Transverse colon (tissue), 4 donors: ENCODE measurements at regions of chr10 and their contacts with region 1.

Region 1: GRCh38 chr10:70549962-70550458 is 52.5 kb downstream of the PRF1 start:
- DNase-seq: peak; percentile 68
- H3K4me3 ChIP-seq: no peak overlapping the region
- H3K27ac ChIP-seq: no peak overlapping the region
- H3K4me1 ChIP-seq: no peaks in the 10 kb centered on the region
- H3K27me3 ChIP-seq: no peaks in the 10 kb centered on the region
- CTCF ChIP-seq: peak; percentile 87 to 92 (median 88)
- EP300 ChIP-seq: no peak
- POLR2A ChIP-seq: no peak

Region 2: GRCh38 chr10:70461215-70461986 is 88.6 kb before region 1 on chr10:
- in situ Hi-C with region 1: loop called in 1 of 4 experiments (anchors 10 kb)
- intact Hi-C with region 1: no loop called
- DNase-seq: peak; percentile 62
- H3K4me3 ChIP-seq: no peak overlapping the region
- H3K27ac ChIP-seq: peak overlapping the region in 2 of 4 donors; percentile 16 to 44
- H3K4me1 ChIP-seq: peaks cover 8 to 28% (median 19%) of the 10 kb centered on the region in 4 donors
- H3K27me3 ChIP-seq: peaks cover 31% of the 10 kb centered on the region
- CTCF ChIP-seq: peak; percentile 73 to 82 (median 80)
- EP300 ChIP-seq: no peak
- POLR2A ChIP-seq: no peak

Region 3: GRCh38 chr10:70537344-70538209 is 12.4 kb before region 1 on chr10:
- in situ Hi-C with region 1: no loop called
- intact Hi-C with region 1: no loop called
- DNase-seq: peak; percentile 62
- H3K4me3 ChIP-seq: no peak overlapping the region
- H3K27ac ChIP-seq: no peak overlapping the region
- H3K4me1 ChIP-seq: no peaks in the 10 kb centered on the region
- H3K27me3 ChIP-seq: no peaks in the 10 kb centered on the region
- CTCF ChIP-seq: peak; percentile 30 to 42 (median 37)
- EP300 ChIP-seq: no peak
- POLR2A ChIP-seq: no peak

Region 4: GRCh38 chr10:70758757-70759514 is 208.9 kb after region 1 on chr10:
- in situ Hi-C with region 1: loop called (anchors 5 to 10 kb)
- intact Hi-C with region 1: loop called (anchors 5 kb)
- DNase-seq: peak; percentile 77
- H3K4me3 ChIP-seq: no peak overlapping the region
- H3K27ac ChIP-seq: no peak overlapping the region
- H3K4me1 ChIP-seq: no peaks in the 10 kb centered on the region
- H3K27me3 ChIP-seq: no peaks in the 10 kb centered on the region
- CTCF ChIP-seq: peak; percentile 66 to 79 (median 76)
- EP300 ChIP-seq: no peak
- POLR2A ChIP-seq: no peak

Region 5: DNA sequence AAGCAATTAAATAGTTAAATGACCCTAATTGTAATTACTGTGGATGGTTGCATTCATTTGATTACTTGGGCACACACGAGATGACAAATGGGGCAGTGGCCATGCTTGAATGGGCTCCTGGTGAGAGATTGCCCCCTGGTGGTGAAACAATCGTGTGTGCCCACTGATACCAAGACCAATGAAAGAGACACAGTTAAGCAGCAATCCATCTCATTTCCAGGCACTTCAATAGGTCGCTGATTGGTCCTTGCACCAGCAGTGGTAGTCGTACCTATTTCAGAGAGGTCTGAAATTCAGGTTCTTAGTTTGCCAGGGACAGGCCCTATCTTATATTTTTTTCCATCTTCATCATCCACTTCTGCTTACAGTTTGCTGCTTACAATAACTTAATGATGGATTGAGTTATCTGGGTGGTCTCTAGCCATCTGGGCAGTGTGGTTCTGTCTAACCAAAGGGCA is 330.1 kb after region 1 on chr10:
- in situ Hi-C with region 1: loop called in 1 of 4 experiments (anchors 25 kb)
- intact Hi-C with region 1: no loop called
- DNase-seq: peak; percentile 82
- H3K4me3 ChIP-seq: no peak overlapping the region
- H3K27ac ChIP-seq: no peak overlapping the region
- H3K4me1 ChIP-seq: no peaks in the 10 kb centered on the region
- H3K27me3 ChIP-seq: no peaks in the 10 kb centered on the region
- CTCF ChIP-seq: peak; percentile 90 to 93 (median 92)
- EP300 ChIP-seq: no peak
- POLR2A ChIP-seq: no peak